HEK293 (cell line): ENCODE measurements at regions of chr1 and their contacts with region 1.

Region 1: GRCh38 chr1:156500797-156501499 is 373 bp upstream of the MEF2D start:
- H3K4me3 ChIP-seq: peak overlapping the region; percentile 69
- H3K27ac ChIP-seq: peak overlapping the region; percentile 92
- H3K4me1 ChIP-seq: peaks cover 9% of the 10 kb centered on the region
- CTCF ChIP-seq: peak; percentile 85; the same call in 1 of the 2 replicates

Region 2: DNA sequence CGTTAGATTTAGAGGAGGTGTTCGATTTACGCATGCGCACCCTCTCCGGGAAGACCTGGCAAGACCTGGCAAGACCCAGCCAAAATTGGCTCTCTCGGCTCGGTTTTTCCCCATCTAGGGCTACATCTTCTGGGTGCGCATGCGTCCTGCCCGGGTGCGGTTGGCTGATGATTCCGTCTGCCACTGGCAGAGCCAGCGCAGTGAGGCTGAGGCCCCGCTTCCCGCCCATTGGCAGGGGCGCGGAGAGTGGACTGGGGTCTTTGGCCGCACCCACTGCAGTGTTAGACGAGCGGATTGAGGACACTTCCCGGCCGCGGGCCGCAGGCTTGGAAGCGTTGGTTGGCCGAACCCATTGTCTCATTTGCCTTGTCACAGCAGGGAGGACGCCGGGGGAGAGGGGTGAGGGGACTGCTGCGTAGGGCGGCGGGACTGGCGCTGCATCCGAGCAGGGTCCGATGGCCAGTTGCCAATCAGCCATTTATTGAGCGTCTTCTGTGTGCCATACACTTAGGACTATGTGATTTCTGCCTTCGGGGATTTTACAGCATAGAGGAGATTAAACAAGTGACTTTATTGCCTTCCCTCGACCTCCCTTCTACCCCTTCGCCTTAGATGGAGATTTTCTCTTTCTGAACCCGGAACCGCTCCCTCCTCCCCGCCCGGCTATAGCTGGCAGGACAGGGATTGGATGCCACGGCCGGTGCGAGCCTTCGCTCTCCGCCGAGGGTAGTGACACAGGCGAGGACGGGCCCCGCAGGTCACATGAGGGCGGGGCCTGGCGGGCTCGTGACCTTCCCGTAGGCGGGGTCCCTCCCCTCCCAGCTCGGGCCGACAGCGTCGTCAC is 44.1 kb before region 1 on chr1:
- CTCF ChIA-PET with region 1: interaction called, 9 read pairs
- POLR2A ChIA-PET with region 1: interaction called, 36 read pairs
- H3K4me3 ChIP-seq: peak overlapping the region; percentile 58
- H3K27ac ChIP-seq: peak overlapping the region; percentile 99
- H3K4me1 ChIP-seq: no peaks in the 10 kb centered on the region
- CTCF ChIP-seq: no peak

Region 3: DNA sequence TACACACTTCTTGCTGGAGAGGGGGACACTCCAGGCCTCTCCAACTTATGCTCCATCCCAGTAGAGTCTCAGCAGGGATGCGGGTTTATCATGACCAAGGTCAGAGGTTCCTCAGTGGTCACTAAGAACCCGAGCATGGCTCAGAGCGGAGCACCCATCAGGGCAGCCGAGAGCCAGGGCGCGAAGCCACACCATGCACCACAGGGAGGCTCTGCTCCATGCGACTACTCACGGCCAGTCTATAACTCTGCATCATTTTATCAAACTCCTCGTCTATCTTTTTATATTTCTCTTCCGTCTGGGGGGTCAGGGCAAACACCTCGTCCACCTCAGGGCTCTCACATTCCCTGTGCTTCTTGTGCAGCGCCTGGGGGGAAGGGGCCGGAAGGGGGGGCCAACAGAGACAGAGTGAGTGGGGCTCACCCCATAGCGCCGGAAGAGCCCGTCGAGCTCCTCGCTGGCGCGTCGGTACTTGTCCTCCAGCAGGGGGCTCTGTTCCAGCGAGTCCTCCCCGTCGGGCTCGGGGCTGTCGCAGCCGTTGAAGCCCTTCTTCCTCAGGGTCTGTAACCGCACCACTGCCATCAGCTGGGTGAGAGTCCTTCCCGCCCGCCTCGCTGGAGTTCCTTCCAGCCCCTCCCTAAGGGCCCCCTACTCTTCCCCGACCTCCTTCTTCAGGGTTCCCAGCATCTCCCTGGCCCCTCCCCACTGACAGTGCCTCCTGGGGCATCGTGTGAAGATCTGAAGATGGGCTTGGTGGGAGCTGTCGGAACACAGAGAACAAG is 20.3 kb before region 1 on chr1:
- CTCF ChIA-PET with region 1: interaction called, 14 read pairs
- POLR2A ChIA-PET with region 1: interaction called, 7 read pairs
- H3K4me3 ChIP-seq: no peak overlapping the region
- H3K27ac ChIP-seq: no peak overlapping the region
- H3K4me1 ChIP-seq: no peaks in the 10 kb centered on the region
- CTCF ChIP-seq: peak; percentile 44

Region 4: DNA sequence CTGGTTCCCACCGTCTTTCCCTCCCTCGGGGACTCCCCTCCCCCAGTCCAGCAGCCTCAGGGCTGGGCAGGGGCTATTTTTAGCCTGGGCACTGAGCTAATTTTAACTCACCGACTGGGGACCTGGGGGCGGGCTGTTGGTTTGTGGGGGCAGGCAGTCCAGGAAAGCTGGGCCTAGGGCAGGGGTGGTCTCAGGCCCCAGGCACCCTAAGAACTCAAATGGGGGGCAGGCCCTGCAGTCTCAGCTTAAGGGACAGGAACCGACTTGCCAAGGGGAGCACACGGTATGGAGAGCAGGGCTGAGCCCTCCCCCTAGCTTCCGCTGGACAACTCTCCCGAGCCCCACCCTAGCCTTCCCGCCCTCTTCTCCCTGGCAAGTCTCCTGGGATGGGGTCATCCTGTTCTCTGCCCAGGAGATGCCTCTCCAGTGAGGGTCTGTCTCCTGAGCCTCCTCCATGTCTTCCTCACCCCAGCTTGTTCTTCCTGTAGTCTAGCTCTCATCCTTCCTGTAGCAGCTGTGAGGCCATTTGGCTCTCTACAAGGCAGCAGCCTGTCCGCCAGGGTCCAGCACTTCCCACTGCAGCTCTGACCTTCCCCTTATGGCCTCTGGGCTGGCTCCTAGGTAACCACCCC is 10.4 kb before region 1 on chr1:
- CTCF ChIA-PET with region 1: interaction called, 14 read pairs
- POLR2A ChIA-PET with region 1: interaction called, 20 read pairs
- H3K4me3 ChIP-seq: no peak overlapping the region
- H3K27ac ChIP-seq: no peak overlapping the region; the same call in 1 of the 2 replicates
- H3K4me1 ChIP-seq: peaks cover 16% of the 10 kb centered on the region
- CTCF ChIP-seq: no peak